K562 (cell line): ENCODE measurements at regions of chr18 and their contacts with region 1.

Region 1: DNA sequence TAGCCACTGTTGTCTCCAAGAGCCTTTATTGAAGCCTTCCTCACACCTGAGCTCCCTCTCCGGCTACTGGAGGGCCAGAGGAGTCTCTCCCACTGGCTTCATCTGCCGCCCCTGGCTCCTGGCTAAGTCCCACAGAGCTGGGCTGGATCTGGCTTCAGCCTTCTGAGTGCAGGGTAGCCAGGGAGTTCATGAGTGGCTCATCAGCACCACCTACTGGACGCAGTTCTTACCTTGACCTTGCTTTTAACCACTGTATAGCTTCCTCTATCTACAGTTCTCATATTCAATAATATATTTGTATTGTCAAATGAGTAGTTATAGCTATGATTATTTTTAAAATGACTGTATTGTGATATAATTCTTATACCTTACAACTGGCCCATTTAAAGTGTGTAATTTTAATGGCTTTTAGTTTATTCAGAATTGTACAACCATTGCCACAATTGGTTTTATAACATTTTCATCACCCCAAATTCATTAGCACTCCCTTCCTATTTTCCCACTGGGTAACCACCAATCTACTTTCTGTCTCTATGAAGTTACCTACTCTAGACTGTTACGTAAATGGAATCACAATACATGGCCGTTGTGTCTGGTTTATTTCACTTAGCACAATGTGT is 17.7 kb downstream of the CNDP1 start:
- DNase-seq: peak; percentile 68 to 77 (median 70)
- ATAC-seq: peak; percentile 99
- H3K4me3 ChIP-seq: no peak overlapping the region
- H3K27ac ChIP-seq: no peak overlapping the region
- H3K4me1 ChIP-seq: no peaks in the 10 kb centered on the region
- H3K27me3 ChIP-seq: peaks cover 2 to 14% of the 10 kb centered on the region in 2 experiments; a peak in 2 of 5 replicates
- CTCF ChIP-seq: peak; percentile 65 to 78 (median 74)
- EP300 ChIP-seq: no peak
- POLR2A ChIP-seq: no peak
- RAD21 ChIP-seq: peak; percentile 73 to 81

Region 2: DNA sequence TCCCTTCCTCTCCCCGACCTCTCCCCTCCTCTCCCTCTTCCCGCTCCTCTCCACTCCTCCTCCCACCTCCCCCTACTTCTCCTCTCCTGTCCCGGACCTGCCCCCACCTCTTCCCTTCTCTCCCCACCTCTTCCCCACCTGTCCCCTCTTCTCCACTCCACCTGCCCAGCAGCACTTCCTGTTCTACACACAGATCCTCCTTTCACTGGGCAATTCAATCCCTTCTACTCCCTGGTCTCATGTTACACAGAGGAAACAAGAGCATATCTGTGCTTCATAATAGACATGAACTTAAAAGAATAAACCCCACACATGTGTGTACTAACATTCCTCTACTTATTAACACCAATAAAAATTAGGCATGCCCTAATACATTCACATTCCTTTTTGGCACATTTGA is 368.9 kb before region 1 on chr18:
- CTCF ChIA-PET with region 1: no interaction called
- POLR2A ChIA-PET with region 1: no interaction called
- in situ Hi-C with region 1: loop called (anchors 10 kb)
- intact Hi-C with region 1: no loop called
- DNase-seq: no peak
- ATAC-seq: no peak
- H3K4me3 ChIP-seq: no peak overlapping the region
- H3K27ac ChIP-seq: no peak overlapping the region
- H3K4me1 ChIP-seq: no peaks in the 10 kb centered on the region; a peak in 1 of 5 replicates
- H3K27me3 ChIP-seq: peaks cover 10 to 28% of the 10 kb centered on the region in 2 experiments; a peak in 3 of 5 replicates
- CTCF ChIP-seq: no peak
- EP300 ChIP-seq: no peak
- POLR2A ChIP-seq: no peak
- RAD21 ChIP-seq: no peak

Region 3: GRCh38 chr18:74196220-74197119 is 355.6 kb before region 1 on chr18:
- CTCF ChIA-PET with region 1: no interaction called
- POLR2A ChIA-PET with region 1: no interaction called
- in situ Hi-C with region 1: no loop called
- intact Hi-C with region 1: loop called (anchors 1 kb)
- DNase-seq: peak; percentile 65 to 70 (median 68)
- ATAC-seq: peak; percentile 91
- H3K4me3 ChIP-seq: no peak overlapping the region
- H3K27ac ChIP-seq: no peak overlapping the region
- H3K4me1 ChIP-seq: no peaks in the 10 kb centered on the region; a peak in 2 of 5 replicates
- H3K27me3 ChIP-seq: peaks cover 0 to 11% of the 10 kb centered on the region in 2 experiments; a peak in 2 of 5 replicates
- CTCF ChIP-seq: peak; percentile 68 to 76 (median 72)
- EP300 ChIP-seq: no peak
- POLR2A ChIP-seq: no peak
- RAD21 ChIP-seq: peak; percentile 75 to 85

Region 4: GRCh38 chr18:74353169-74353775 is 198.8 kb before region 1 on chr18:
- CTCF ChIA-PET with region 1: interaction called, 3 read pairs
- POLR2A ChIA-PET with region 1: interaction called, 5 read pairs
- in situ Hi-C with region 1: no loop called
- intact Hi-C with region 1: loop called (anchors 1 kb)
- DNase-seq: peak in 3 of 4 experiments; percentile 4 to 52 (median 12)
- ATAC-seq: peak; percentile 85
- H3K4me3 ChIP-seq: no peak overlapping the region
- H3K27ac ChIP-seq: no peak overlapping the region
- H3K4me1 ChIP-seq: no peaks in the 10 kb centered on the region
- H3K27me3 ChIP-seq: no peaks in the 10 kb centered on the region; a peak in 1 of 5 replicates
- CTCF ChIP-seq: peak; percentile 54 to 64 (median 63)
- EP300 ChIP-seq: no peak
- POLR2A ChIP-seq: no peak
- RAD21 ChIP-seq: peak; percentile 67 to 84

Region 5: GRCh38 chr18:74368901-74369705 is 182.9 kb before region 1 on chr18:
- CTCF ChIA-PET with region 1: no interaction called
- POLR2A ChIA-PET with region 1: no interaction called
- in situ Hi-C with region 1: loop called (anchors 10 kb)
- intact Hi-C with region 1: no loop called
- DNase-seq: no peak
- ATAC-seq: no peak
- H3K4me3 ChIP-seq: no peak overlapping the region
- H3K27ac ChIP-seq: no peak overlapping the region
- H3K4me1 ChIP-seq: no peaks in the 10 kb centered on the region
- H3K27me3 ChIP-seq: peaks cover 13 to 17% of the 10 kb centered on the region in 2 experiments; a peak in 4 of 5 replicates
- CTCF ChIP-seq: no peak
- EP300 ChIP-seq: no peak
- POLR2A ChIP-seq: no peak
- RAD21 ChIP-seq: no peak

Region 6: DNA sequence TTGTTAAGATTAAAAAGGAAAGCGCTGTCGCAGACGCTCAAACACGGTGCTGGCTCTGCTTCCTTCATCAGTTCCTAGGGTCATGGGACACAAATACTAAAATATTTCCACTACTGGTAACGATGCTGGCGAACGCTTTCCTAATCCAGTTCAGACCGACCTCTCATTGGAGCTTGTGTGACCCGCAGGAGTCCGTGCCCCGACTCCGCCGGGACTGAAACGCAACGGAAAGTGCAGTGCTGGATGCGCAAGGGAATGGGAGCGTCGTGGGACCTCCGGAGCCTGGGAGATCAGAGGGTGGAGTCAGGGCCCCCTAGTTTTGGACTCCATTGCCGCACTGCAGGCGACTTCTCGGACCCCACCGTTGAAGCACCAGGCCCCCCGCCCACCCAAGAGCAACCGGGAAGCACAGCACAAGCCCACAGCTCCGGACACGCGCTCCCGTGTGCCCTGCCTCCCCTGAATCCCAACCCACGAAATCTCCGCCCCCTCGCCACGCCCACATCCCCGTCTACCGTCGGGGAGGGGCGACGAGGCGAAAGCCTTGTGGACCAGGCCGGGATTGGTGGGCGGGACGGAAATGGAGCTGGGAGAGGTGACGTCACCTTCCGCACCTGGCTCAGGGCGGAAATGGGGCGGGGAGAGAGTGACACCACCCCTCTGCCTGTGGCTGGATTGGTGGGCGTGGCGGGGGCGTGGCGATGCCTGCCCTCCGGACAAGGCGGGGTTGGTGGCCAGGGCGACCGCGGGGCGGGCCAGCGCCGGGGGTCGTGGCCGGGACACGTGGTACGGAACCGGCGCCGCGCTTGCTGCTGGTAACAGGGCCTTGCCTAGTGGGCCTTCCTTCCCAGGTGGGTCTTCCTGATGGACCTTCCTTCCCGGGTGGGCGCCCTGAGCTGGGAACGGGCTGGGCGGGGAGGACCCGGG is 56.2 kb before region 1 on chr18 and contains the start of gene CNDP2:
- CTCF ChIA-PET with region 1: no interaction called
- POLR2A ChIA-PET with region 1: interaction called, 3 read pairs
- in situ Hi-C with region 1: no loop called
- intact Hi-C with region 1: loop called (anchors 5 kb)
- DNase-seq: peak; percentile 90 to 97 (median 94)
- ATAC-seq: peak; percentile 91
- H3K4me3 ChIP-seq: peak within 1 kb of the TSS; percentile 80
- H3K27ac ChIP-seq: peak within 1 kb of the TSS; percentile 93
- H3K4me1 ChIP-seq: peaks cover 13 to 19% of the 10 kb centered on the region in 2 experiments; a peak in 4 of 5 replicates
- H3K27me3 ChIP-seq: no peaks in the 10 kb centered on the region
- CTCF ChIP-seq: no peak
- EP300 ChIP-seq: no peak
- POLR2A ChIP-seq: peak; percentile 84
- RAD21 ChIP-seq: no peak
- polyA plus RNA-seq, gene CNDP2: 34.1 to 53.8 TPM